Mammary epithelial cell (primary cell): ENCODE measurements at regions of chr3 and their contacts with region 1.

Region 1: GRCh38 chr3:190443257-190443656 is 6.4 kb downstream of the TMEM207 start:
- DNase-seq: no peak
- H3K4me3 ChIP-seq: no peak overlapping the region
- H3K27ac ChIP-seq: no peak overlapping the region
- H3K4me1 ChIP-seq: no peaks in the 10 kb centered on the region
- H3K27me3 ChIP-seq: no peaks in the 10 kb centered on the region
- CTCF ChIP-seq: peak; percentile 26 to 45

Region 2: DNA sequence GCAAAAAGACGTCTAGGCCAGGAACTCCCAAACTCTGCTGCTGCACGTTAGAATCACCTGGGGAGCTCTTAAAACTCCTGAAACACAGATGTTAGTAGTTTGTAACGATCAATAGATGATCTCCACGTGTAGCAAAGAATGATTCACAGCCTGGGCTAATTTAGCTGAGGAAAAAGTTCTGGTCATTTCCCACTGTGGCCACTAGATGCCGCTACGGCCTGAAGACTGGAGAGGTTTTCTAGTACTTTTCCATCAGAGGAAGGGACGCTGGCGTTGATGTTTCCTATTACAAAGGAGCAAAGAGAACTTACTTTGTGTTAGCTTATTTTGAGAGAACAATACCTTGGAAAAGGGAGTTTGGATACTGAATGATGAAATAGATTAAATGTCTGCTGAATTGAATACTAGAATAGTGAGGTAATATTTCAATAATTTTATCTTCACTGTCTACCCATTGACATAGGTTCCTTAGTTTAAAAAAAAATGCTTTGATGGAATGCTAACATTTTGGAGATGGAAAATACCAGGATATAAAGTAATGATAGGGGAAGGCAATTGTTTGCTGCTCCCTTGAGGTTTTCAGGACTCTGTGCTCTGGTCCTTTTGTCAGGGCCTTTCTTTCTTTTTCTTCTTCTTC is 481.6 kb before region 1 on chr3:
- CTCF ChIA-PET with region 1: interaction called, 8 read pairs
- dilution Hi-C with region 1: no loop called
- in situ Hi-C with region 1: loop called (anchors 25 kb)
- intact Hi-C with region 1: loop called (anchors 2 kb)
- DNase-seq: peak; percentile 82
- H3K4me3 ChIP-seq: no peak overlapping the region
- H3K27ac ChIP-seq: peak overlapping the region; percentile 2
- H3K4me1 ChIP-seq: peaks cover 18% of the 10 kb centered on the region
- H3K27me3 ChIP-seq: no peaks in the 10 kb centered on the region
- CTCF ChIP-seq: peak; percentile 90 to 97